ENCODE measurements at regions of chr3 and their contacts with region 1.

Region 1: DNA sequence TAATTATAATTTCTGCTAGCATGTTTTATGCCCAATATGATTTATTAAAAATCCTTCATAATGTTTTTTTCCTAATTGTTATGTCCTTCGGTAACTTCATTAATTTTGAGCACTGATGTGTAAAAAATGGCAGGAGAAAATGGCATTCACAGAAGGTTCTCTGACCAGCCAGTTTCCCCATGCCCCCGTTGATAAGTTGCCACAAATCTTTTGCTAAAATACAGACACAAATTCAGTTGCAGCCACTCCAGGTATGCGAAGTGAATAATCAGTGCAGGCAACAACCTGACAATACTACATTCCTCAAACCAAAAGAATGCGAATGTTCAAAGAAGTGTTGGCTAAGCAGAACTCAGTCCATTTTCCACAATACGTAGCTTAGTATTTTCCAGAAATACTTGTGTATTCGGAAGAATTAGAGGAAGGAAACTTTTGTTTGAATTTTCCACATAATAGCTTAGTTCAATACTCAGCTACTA is 32.7 kb downstream of the CHL1 start:
- DNase-seq: peak; percentile 26
- H3K4me3 ChIP-seq: no peak overlapping the region
- H3K27ac ChIP-seq: peak overlapping the region; percentile 43
- H3K4me1 ChIP-seq: peaks cover 16% of the 10 kb centered on the region
- H3K27me3 ChIP-seq: no peaks in the 10 kb centered on the region
- CTCF ChIP-seq: no peak

Region 2: GRCh38 chr3:264394-265156 is 35.4 kb after region 1 on chr3:
- CTCF ChIA-PET with region 1: no interaction called
- dilution Hi-C with region 1: no loop called
- in situ Hi-C with region 1: no loop called
- intact Hi-C with region 1: loop called (anchors 2 kb)
- DNase-seq: peak; percentile 86
- H3K4me3 ChIP-seq: no peak overlapping the region
- H3K27ac ChIP-seq: peak overlapping the region; percentile 49
- H3K4me1 ChIP-seq: peaks cover 4% of the 10 kb centered on the region
- H3K27me3 ChIP-seq: no peaks in the 10 kb centered on the region
- CTCF ChIP-seq: no peak